K562 (cell line): ENCODE measurements at regions of chr6 and their contacts with region 1.

Region 1: DNA sequence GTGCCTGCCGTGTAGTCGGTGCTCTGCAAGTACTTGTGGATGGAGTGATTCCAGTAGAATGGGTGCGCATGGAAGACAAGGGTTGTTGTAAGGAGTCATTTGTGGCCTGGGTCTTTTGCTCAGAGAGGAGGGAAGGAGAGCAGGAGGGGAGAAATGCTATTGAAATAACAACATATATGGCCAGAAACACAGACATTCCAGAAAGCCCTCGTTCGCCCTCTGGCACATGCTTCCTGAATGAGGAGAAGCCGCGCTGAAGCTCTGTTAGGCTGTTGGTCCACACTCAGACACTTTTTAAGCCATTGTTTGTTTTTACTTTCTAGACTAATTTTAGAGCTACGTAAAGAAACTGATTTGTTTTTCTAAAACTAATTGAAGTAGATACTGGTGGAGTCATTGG is 107.4 kb downstream of the RPP40 start:
- DNase-seq: no peak
- ATAC-seq: no peak
- H3K4me3 ChIP-seq: no peak overlapping the region
- H3K27ac ChIP-seq: no peak overlapping the region
- H3K4me1 ChIP-seq: no peaks in the 10 kb centered on the region
- H3K27me3 ChIP-seq: no peaks in the 10 kb centered on the region
- CTCF ChIP-seq: no peak
- EP300 ChIP-seq: no peak
- POLR2A ChIP-seq: no peak
- RAD21 ChIP-seq: no peak

Region 2: GRCh38 chr6:4883298-4883697 is 13.1 kb before region 1 on chr6:
- CTCF ChIA-PET with region 1: no interaction called
- POLR2A ChIA-PET with region 1: interaction called, 13 read pairs
- in situ Hi-C with region 1: no loop called
- intact Hi-C with region 1: no loop called
- DNase-seq: no peak
- ATAC-seq: no peak
- H3K4me3 ChIP-seq: no peak overlapping the region
- H3K27ac ChIP-seq: no peak overlapping the region
- H3K4me1 ChIP-seq: peaks cover 0 to 4% of the 10 kb centered on the region in 2 experiments; a peak in 2 of 5 replicates
- H3K27me3 ChIP-seq: no peaks in the 10 kb centered on the region
- CTCF ChIP-seq: no peak
- EP300 ChIP-seq: no peak
- POLR2A ChIP-seq: no peak
- RAD21 ChIP-seq: no peak

Region 3: GRCh38 chr6:5851261-5851757 is 954.9 kb after region 1 on chr6:
- CTCF ChIA-PET with region 1: no interaction called
- POLR2A ChIA-PET with region 1: no interaction called
- in situ Hi-C with region 1: no loop called
- intact Hi-C with region 1: no loop called
- DNase-seq: peak in 3 of 4 experiments; percentile 46 to 62 (median 58)
- ATAC-seq: peak; percentile 79
- H3K4me3 ChIP-seq: 0 out of 2 replicates have a peak overlapping the region, but pooled peaks have one; percentile 7
- H3K27ac ChIP-seq: no peak overlapping the region
- H3K4me1 ChIP-seq: peaks cover 0 to 5% of the 10 kb centered on the region in 2 experiments; a peak in 1 of 5 replicates
- H3K27me3 ChIP-seq: peaks cover 25 to 61% of the 10 kb centered on the region in 2 experiments; a peak in 4 of 5 replicates
- CTCF ChIP-seq: no peak
- EP300 ChIP-seq: no peak
- POLR2A ChIP-seq: no peak
- RAD21 ChIP-seq: no peak